ENCODE measurements at regions of chr1 and their contacts with region 1.

Region 1: DNA sequence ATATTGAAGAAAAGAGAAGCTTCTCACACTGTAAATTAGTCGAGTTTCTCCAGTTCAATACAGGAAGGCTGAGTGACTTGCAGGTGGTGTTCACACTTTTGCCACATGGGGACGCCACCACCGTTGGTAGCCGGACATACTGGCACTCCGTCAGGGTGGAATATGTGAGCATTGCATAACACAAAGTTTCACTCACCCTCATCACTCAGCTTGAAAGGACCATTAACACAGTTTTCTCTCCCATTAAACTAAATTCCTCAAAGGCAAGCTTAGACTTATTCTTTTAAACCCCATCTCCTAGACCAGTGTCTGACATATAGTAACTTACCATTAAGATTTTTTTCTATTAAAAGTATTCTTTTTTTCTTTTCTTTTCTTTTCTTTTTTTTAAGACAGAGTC is 105.3 kb upstream of the SERBP1 start:
- DNase-seq: peak; percentile 89
- H3K4me3 ChIP-seq: no peak overlapping the region
- H3K27ac ChIP-seq: no peak overlapping the region
- H3K4me1 ChIP-seq: peaks cover 2 to 30% (median 7%) of the 10 kb centered on the region in 4 donors
- H3K27me3 ChIP-seq: no peaks in the 10 kb centered on the region
- CTCF ChIP-seq: peak; percentile 86 to 97 (median 93)
- EP300 ChIP-seq: no peak
- POLR2A ChIP-seq: no peak

Region 2: DNA sequence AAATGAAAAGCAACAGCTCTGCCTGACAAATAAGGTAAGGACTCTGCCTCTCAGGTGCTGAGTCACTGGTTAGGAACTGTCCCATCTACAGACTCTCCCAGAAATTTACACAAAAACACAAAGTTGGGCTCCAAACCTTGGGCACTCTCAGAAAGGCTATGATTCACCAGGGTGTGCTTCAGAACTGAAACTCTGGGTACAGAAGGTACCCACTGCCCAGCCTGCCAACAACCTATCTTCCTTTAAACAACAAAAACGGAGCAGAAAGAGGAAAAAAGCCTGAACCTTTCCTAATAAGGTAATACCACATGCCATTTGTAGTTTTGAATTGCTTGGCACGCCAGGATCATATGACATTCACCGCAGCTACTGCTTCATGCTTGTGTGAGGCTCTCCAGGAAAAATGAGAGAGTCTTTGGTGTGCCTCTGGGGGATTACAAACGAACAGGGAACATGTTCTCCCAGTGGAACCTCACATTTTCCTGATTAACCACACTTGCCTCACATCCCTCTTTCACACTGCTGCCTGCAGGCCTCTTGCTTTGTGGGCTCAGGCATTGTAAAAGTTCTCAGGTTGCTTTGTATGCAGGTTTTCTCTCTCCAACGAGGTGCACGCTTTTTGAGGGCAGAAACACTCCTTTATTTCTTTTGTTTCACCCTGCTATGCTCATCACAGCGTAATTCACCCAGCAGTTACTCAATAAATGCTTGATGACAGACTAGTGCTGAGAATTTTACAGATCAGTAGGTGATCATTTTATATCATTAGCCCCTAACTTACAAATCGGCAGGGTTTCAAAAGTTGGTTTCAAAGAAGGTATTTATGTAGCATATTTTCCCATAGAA is 214.6 kb after region 1 on chr1:
- in situ Hi-C with region 1: loop called in 1 of 4 experiments (anchors 10 kb)
- intact Hi-C with region 1: loop called (anchors 10 kb)
- DNase-seq: no peak
- H3K4me3 ChIP-seq: no peak overlapping the region
- H3K27ac ChIP-seq: peak overlapping the region; percentile 79 to 84 (median 82)
- H3K4me1 ChIP-seq: peaks cover 31 to 55% (median 39%) of the 10 kb centered on the region in 4 donors
- H3K27me3 ChIP-seq: no peaks in the 10 kb centered on the region
- CTCF ChIP-seq: no peak
- EP300 ChIP-seq: no peak
- POLR2A ChIP-seq: no peak

Region 3: DNA sequence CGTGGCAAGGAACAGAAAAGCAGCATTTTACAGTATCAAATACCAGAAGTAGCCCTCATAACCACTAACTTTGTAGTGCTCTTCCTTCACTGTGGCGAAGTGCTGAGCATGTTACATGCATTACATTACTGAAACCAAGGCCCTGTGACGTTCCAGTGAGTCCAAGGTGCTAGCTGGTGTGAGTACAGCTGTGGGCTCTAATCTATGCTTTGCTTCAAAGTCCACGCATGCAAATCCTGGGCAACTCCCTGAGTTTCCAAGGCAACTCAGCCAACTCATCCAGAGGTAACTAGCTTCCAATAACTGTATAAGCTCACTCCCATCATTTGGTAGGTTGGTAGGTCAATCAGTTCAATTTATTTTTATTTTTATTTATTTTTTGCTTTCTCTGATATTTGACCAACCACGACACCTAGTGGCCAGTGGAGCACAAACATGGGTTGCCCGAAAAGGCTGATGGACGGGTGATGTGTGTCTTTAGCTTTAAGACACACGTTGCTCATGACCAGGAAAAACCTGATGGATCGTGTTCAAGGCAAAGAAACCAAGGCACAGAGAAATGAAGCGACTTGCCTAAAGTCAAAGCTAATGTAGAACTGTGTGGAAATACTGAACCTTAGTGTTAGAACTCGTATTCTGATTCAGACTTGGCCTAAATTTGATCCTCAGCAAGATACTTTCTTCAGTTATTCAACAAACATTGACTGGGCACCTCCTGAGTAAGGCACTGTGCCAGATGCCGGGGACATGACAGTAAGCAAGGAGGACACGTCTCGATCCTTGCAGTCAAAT is 224.8 kb after region 1 on chr1:
- in situ Hi-C with region 1: loop called in 3 of 4 experiments (anchors 5 to 10 kb)
- intact Hi-C with region 1: loop called (anchors 10 kb)
- DNase-seq: peak; percentile 85
- H3K4me3 ChIP-seq: no peak overlapping the region
- H3K27ac ChIP-seq: peak overlapping the region; percentile 63 to 81 (median 76)
- H3K4me1 ChIP-seq: peaks cover 24 to 78% (median 38%) of the 10 kb centered on the region in 4 donors
- H3K27me3 ChIP-seq: no peaks in the 10 kb centered on the region
- CTCF ChIP-seq: peak; percentile 82 to 96 (median 86)
- EP300 ChIP-seq: no peak
- POLR2A ChIP-seq: peak; percentile 69

Region 4: DNA sequence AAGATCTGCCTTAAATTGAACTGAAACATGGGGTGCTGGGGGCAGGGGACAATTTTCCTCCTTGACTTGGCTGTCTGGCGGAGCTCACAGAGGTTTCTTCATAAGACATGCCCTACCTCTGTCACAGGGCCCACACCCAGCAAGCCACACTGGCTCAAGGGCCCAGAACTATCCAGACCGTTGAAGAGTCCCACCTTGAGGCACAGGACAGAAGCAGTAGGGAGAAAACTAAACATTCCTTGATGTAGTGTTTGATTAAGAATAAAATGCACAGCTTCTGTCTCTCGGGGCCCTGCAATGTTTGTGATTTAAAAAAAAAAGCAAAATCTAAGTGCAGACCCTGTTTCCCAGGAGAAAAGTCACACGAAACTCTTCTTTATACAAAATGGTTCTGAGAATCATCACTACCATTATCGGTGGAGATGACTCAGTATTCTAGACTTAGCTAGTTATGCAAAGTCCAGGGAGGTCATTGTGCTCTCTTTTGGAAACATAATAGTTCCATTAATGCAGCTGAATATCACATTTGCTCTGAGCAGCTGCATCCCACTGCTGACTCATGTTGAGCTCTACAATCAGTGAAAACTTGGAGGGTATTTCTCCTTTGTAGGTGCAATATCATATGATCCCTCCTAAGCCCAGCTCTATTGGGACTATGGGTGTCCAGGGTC is 568.5 kb after region 1 on chr1:
- in situ Hi-C with region 1: loop called in 3 of 4 experiments (anchors 10 to 25 kb)
- intact Hi-C with region 1: no loop called
- DNase-seq: no peak
- H3K4me3 ChIP-seq: no peak overlapping the region
- H3K27ac ChIP-seq: no peak overlapping the region
- H3K4me1 ChIP-seq: peaks cover 0 to 31% (median 19%) of the 10 kb centered on the region in 4 donors
- H3K27me3 ChIP-seq: no peaks in the 10 kb centered on the region
- CTCF ChIP-seq: no peak
- EP300 ChIP-seq: no peak
- POLR2A ChIP-seq: no peak

Region 5: DNA sequence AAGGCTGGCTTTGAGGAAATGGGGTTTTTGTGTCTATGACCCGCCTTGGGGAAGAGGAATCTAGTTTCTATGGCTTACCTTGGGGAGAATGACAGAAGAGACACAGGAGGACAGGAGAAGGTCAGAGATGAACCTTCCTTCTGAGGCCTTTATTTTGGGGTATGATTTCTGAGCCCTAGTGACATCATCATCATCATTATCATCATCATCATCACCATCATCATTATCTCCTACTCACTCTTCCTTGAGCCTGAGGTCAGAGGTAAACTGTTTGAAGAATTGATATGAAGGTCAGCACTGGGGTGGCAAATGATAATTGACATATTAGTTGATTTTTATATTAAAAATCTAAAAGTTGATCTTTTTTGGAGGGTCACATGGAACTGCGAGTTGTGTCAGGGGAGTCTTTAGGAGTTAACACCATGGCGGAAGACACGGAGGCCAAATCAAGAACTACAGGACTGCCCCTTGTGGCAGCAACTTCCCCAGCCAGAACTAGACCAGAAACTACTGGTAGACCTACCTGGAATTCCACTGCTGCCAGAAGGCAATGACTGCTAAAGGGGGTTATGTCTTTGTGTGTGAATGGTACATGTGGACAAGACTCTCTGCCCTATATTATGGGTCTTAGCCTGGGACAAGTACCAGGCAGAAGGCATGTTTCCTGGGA is 746.6 kb after region 1 on chr1:
- in situ Hi-C with region 1: no loop called
- intact Hi-C with region 1: no loop called
- DNase-seq: no peak
- H3K4me3 ChIP-seq: no peak overlapping the region
- H3K27ac ChIP-seq: no peak overlapping the region
- H3K4me1 ChIP-seq: no peaks in the 10 kb centered on the region
- H3K27me3 ChIP-seq: no peaks in the 10 kb centered on the region
- CTCF ChIP-seq: no peak
- EP300 ChIP-seq: no peak
- POLR2A ChIP-seq: no peak

Region 6: DNA sequence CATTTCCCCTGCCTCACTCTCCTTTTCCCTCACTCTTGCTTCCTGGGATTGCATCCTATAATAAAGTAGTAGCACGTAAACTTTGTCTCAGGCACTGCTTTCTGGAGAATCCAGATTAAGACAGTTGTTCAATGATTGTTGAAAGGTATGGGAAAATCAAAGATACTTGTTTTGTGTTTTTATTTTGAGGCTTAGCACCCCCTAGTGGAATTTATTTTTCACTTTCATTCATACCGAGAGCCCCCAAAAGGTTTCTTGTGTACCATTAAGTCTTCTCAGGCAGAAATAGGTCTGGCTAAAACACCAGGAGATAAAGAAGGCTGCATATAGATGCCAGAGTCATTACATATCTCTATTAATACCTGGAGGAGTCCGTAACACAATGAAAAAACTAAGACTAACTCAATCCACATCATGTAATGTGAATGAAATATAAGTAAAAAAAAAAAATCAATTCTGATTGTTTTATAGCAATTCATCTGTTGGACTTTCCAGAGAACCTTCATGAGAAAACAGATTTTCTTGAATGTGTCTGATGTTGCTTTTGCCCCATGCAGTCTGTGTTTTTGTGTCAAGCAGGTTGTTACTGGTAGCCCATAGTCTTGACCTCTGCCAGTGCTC is 810.8 kb after region 1 on chr1:
- in situ Hi-C with region 1: loop called in 1 of 4 experiments (anchors 25 kb)
- intact Hi-C with region 1: no loop called
- DNase-seq: no peak
- H3K4me3 ChIP-seq: no peak overlapping the region
- H3K27ac ChIP-seq: no peak overlapping the region
- H3K4me1 ChIP-seq: no peaks in the 10 kb centered on the region
- H3K27me3 ChIP-seq: no peaks in the 10 kb centered on the region
- CTCF ChIP-seq: peak; percentile 27 to 50 (median 42)
- EP300 ChIP-seq: no peak
- POLR2A ChIP-seq: no peak